Activated CD4-positive, alpha-beta memory T cell treated with anti-CD3 and anti-CD28 coated beads for 36 hours (primary cell): ENCODE measurements at regions of chr19 and their contacts with region 1.

Region 1: DNA sequence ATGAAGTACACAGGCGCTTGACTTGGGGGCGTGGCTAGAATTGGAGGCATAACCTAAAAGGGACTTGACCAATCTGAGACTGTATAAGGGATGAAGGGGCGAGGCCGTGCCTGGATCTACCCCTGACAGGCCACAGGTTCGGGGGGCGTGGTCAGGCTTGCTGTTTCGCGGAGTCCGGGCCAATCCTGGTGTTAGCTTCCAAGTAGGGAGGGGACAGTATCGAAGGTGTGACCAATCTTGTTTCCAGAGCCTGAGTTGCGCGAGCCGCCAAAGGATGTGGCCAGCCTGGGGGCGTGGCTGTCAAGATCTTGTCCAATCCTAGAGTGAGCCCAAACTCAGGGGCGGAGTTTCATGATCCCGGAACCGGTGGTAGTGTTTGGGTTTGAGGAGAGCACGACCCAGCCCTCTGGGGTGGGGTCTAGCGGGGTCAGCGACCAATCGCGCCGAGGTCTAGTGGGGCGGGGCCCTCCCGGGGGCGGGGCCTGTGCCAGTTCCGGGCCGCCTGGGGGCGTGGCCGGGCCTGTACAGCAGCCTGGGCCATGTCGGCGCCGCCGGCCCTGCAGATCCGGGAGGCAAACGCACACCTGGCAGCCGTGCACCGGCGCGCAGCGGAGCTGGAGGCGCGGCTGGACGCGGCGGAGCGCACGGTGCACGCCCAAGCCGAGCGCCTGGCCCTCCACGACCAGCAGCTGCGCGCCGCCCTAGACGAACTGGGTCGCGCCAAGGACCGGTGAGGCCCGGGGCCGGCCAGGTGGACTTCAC is at the start of gene VMAC:
- DNase-seq: peak; percentile 100
- H3K4me3 Mint-ChIP-seq: peak within 1 kb of the TSS; percentile 97
- H3K27ac Mint-ChIP-seq: peak within 1 kb of the TSS; percentile 98
- H3K4me1 Mint-ChIP-seq: peaks cover 38% of the 10 kb centered on the region
- H3K27me3 Mint-ChIP-seq: no peaks in the 10 kb centered on the region
- total RNA-seq, gene VMAC: 2.9 to 3.3 TPM

Region 2: DNA sequence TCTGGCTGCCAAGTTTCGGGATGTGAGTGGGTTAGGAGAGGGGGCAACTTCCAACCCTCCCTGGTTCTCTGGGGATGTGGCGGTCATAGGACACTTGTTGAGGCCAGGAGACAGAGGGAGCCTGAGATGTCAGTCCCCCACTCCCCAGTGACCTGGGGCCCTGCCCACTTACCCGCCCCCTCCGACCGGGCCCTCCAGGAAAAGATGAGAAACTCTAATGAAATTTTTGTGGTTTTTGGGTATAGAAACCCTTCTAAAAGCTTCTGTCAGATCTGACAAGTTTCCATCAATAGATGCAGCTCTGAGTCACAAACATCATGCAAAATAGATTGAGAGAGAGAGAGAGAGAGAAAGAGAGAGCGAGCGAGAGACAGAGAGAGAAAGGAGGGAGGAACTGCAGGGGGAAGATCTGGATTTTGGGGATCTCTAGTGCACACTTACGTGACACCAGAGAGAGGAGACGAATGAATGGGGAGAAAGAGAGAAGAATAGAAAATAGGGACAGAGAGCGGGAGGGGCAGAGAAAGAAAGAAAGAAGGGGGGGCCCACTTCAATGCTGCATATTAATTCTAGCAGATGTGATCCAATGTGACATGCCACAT is 657.9 kb before region 1 on chr19:
- CTCF ChIA-PET with region 1: no interaction called
- POLR2A ChIA-PET with region 1: no interaction called
- intact Hi-C with region 1: no loop called
- DNase-seq: peak; percentile 36
- H3K4me3 Mint-ChIP-seq: no peak overlapping the region
- H3K27ac Mint-ChIP-seq: no peak overlapping the region
- H3K4me1 Mint-ChIP-seq: peaks cover 3% of the 10 kb centered on the region
- H3K27me3 Mint-ChIP-seq: peaks cover 11% of the 10 kb centered on the region

Region 3: GRCh38 chr19:5680437-5681368 is 223.8 kb before region 1 on chr19 and contains the starts of genes HSD11B1L and MICOS13:
- CTCF ChIA-PET with region 1: no interaction called
- POLR2A ChIA-PET with region 1: no interaction called
- intact Hi-C with region 1: loop called (anchors 1 kb)
- DNase-seq: peak; percentile 99
- H3K4me3 Mint-ChIP-seq: peak within 1 kb of the TSS; percentile 96
- H3K27ac Mint-ChIP-seq: peak within 1 kb of the TSS; percentile 89
- H3K4me1 Mint-ChIP-seq: peaks cover 17% of the 10 kb centered on the region
- H3K27me3 Mint-ChIP-seq: no peaks in the 10 kb centered on the region
- total RNA-seq, gene HSD11B1L: 3.8 to 4.1 TPM
- total RNA-seq, gene MICOS13: 50.9 to 55.3 TPM

Region 4: DNA sequence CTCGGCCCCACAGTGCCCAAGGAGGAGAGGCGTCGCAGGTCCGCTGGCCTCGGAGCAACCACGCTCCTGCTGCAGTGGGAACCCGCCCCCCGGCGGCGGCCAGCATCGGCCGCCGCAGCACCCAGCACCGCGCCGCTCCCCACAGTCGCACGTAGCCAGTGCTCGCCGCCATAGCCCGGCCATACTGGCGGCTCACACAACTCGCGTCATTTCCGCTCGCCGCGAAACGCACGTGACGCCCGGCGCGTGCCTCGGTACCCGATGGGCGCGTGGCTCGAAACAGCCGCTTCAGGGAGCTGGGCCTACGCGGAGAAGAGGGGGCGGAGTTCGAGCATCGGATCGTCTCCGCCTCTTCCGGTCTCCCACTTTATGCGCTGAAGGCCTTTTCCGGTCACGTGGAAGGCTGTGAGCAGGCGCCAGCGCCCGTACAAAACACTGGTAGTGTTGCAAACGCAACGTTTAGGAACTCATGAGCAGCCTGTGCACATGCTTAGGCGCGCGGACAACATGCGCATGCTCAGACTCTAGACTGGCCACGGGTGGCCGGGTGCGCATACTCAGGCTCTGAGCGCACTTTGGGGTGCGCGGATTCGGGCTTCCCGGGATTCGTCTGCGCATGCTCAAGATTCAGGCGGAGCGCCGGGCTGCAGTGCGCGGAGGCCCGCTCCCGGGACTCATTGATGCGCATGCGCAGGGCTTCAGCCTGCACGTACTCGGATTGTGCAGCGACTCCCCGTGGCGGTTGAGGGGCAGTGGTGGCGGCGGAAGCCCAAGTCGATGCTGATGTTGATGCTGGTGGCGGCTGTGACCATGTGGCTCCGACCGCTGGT is 184.4 kb before region 1 on chr19 and contains the starts of genes CATSPERD and LONP1:
- CTCF ChIA-PET with region 1: no interaction called
- POLR2A ChIA-PET with region 1: interaction called, 8 read pairs
- intact Hi-C with region 1: loop called (anchors 1 kb)
- DNase-seq: peak; percentile 99
- H3K4me3 Mint-ChIP-seq: peak within 1 kb of the TSS; percentile 95
- H3K27ac Mint-ChIP-seq: peak within 1 kb of the TSS; percentile 99
- H3K4me1 Mint-ChIP-seq: peaks cover 30% of the 10 kb centered on the region
- H3K27me3 Mint-ChIP-seq: no peaks in the 10 kb centered on the region
- total RNA-seq, gene CATSPERD: not detected
- total RNA-seq, gene LONP1: 178 to 181 TPM

Region 5: DNA sequence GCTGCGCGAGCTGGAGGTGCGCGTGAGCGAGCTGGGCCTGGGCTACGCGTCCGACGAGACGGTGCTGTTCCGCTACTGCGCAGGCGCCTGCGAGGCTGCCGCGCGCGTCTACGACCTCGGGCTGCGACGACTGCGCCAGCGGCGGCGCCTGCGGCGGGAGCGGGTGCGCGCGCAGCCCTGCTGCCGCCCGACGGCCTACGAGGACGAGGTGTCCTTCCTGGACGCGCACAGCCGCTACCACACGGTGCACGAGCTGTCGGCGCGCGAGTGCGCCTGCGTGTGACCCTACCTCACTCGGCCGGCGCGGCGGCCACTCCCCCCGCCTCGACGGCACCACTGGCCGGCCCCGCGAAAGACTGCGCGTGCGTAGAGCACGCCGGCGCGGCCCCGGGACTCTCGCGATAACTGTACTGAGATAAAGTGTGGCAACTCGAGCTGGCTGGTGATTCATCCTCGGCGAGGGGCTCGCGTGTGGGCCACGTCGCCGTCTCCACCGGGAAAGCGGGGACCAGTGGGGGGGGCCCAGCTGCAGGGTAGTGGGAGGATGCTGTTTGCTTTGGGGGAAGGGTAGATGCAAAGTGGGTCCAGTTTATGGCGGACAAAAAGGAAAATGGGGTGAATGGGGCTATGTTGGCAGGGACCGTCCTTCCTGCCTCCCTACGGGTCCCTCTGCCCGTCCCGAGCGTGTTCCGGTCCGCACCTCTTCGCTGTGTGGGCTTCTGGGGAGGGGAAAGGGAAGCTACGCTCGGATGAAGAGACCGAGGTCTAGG is 76.5 kb before region 1 on chr19:
- CTCF ChIA-PET with region 1: interaction called, 6 read pairs
- POLR2A ChIA-PET with region 1: interaction called, 36 read pairs
- intact Hi-C with region 1: no loop called
- DNase-seq: peak; percentile 97
- H3K4me3 Mint-ChIP-seq: peak overlapping the region; percentile 98
- H3K27ac Mint-ChIP-seq: peak overlapping the region; percentile 97
- H3K4me1 Mint-ChIP-seq: peaks cover 4% of the 10 kb centered on the region
- H3K27me3 Mint-ChIP-seq: no peaks in the 10 kb centered on the region

Region 6: GRCh38 chr19:5977785-5978605 is 73.5 kb after region 1 on chr19 and contains the start of gene RANBP3:
- CTCF ChIA-PET with region 1: no interaction called
- POLR2A ChIA-PET with region 1: interaction called, 3 read pairs
- intact Hi-C with region 1: loop called (anchors 1 kb)
- DNase-seq: peak; percentile 99
- H3K4me3 Mint-ChIP-seq: peak within 1 kb of the TSS; percentile 98
- H3K27ac Mint-ChIP-seq: peak within 1 kb of the TSS; percentile 92
- H3K4me1 Mint-ChIP-seq: peaks cover 57% of the 10 kb centered on the region
- H3K27me3 Mint-ChIP-seq: no peaks in the 10 kb centered on the region
- total RNA-seq, gene RANBP3: 78.1 to 81.3 TPM

Region 7: GRCh38 chr19:6199240-6199983 is 294.9 kb after region 1 on chr19:
- CTCF ChIA-PET with region 1: no interaction called
- POLR2A ChIA-PET with region 1: no interaction called
- intact Hi-C with region 1: loop called (anchors 1 kb)
- DNase-seq: peak; percentile 100
- H3K4me3 Mint-ChIP-seq: peak overlapping the region; percentile 98
- H3K27ac Mint-ChIP-seq: peak overlapping the region; percentile 84
- H3K4me1 Mint-ChIP-seq: peaks cover 13% of the 10 kb centered on the region
- H3K27me3 Mint-ChIP-seq: peaks cover 1% of the 10 kb centered on the region

Region 8: GRCh38 chr19:6424939-6425731 is 520.6 kb after region 1 on chr19:
- CTCF ChIA-PET with region 1: no interaction called
- POLR2A ChIA-PET with region 1: no interaction called
- intact Hi-C with region 1: loop called (anchors 1 kb)
- DNase-seq: peak; percentile 100
- H3K4me3 Mint-ChIP-seq: peak overlapping the region; percentile 75
- H3K27ac Mint-ChIP-seq: peak overlapping the region; percentile 92
- H3K4me1 Mint-ChIP-seq: peaks cover 36% of the 10 kb centered on the region
- H3K27me3 Mint-ChIP-seq: no peaks in the 10 kb centered on the region